Calu3 (cell line): ENCODE measurements at regions of chr10 and their contacts with region 1.

Region 1: GRCh38 chr10:95183271-95184230 is 10.5 kb upstream of the ACSM6 start:
- DNase-seq: peak; percentile 93
- H3K4me3 Mint-ChIP-seq: peak overlapping the region; percentile 70
- H3K27ac Mint-ChIP-seq: no peak overlapping the region
- H3K4me1 Mint-ChIP-seq: peaks cover 16% of the 10 kb centered on the region
- H3K27me3 Mint-ChIP-seq: no peaks in the 10 kb centered on the region
- CTCF ChIP-seq: peak; percentile 84

Region 2: DNA sequence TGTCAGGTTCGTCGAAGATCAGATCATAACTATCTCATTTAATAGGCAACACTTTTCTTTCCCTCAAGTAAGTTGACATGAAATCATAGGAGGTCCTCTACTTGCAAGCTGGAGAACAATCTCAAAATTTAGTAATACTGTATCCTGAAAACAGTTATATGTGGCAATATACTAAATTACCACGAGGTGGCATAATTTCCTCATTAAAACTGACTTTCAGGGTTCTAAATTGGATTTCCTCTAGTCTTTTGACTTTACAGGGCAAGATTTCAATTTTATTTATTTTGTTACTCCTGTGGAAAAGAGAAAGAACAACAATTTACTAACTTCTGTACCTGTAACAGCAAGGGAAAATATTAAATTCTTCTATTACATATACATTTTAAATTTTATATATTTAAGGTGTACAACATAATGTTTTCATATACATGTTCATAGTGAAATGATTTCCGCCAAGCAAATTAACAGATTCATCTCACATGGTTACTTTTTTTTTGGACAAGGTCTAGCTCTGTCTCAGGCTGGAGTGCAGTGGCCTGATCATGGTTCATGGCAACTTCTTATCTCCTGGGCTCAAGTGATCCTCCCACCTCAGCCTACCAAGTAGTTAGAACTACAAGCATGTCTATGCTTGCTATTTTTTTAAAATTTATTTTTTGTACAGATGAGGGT is 553.4 kb before region 1 on chr10:
- CTCF ChIA-PET with region 1: no interaction called
- intact Hi-C with region 1: loop called (anchors 5 kb)
- DNase-seq: no peak
- H3K4me3 Mint-ChIP-seq: no peak overlapping the region
- H3K27ac Mint-ChIP-seq: no peak overlapping the region
- H3K4me1 Mint-ChIP-seq: no peaks in the 10 kb centered on the region
- H3K27me3 Mint-ChIP-seq: no peaks in the 10 kb centered on the region
- CTCF ChIP-seq: no peak

Region 3: GRCh38 chr10:94963901-94964300 is 219.7 kb before region 1 on chr10:
- CTCF ChIA-PET with region 1: no interaction called
- intact Hi-C with region 1: loop called (anchors 5 kb)
- DNase-seq: peak; percentile 6
- H3K4me3 Mint-ChIP-seq: no peak overlapping the region
- H3K27ac Mint-ChIP-seq: no peak overlapping the region
- H3K4me1 Mint-ChIP-seq: peaks cover 9% of the 10 kb centered on the region
- H3K27me3 Mint-ChIP-seq: no peaks in the 10 kb centered on the region
- CTCF ChIP-seq: peak; percentile 52

Region 4: DNA sequence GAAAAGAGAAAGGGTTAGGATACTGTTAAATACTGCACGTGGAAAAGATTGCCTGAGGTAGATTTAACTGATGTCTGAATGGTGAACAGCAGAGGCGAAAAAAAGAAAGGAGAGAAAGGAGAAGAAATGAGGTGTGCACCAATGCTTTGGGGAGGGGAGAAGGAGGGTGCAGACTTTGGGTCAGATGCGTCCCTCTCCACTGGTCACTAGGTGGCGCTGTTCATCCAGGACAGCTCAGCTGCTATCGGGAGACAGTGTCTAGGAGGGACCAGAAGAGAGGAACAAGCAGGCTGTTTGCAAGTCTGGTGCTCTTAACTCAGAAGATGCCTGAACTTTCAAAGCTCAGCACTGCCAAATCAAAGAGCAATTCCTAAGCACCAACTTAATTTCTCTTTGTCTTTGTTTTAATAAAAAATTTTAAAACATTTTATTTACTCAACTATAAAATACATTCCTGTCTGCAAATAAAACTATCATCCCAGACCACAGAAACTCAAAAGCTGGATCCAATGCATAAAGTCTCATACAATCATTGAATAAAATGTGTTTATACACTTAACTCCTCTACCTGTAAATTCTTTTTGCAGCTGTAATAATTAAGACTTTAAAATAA is 191.2 kb after region 1 on chr10:
- CTCF ChIA-PET with region 1: no interaction called
- intact Hi-C with region 1: loop called (anchors 5 kb)
- DNase-seq: peak; percentile 73
- H3K4me3 Mint-ChIP-seq: no peak overlapping the region
- H3K27ac Mint-ChIP-seq: no peak overlapping the region
- H3K4me1 Mint-ChIP-seq: no peaks in the 10 kb centered on the region
- H3K27me3 Mint-ChIP-seq: peaks cover 22% of the 10 kb centered on the region
- CTCF ChIP-seq: peak; percentile 55